Transverse colon (tissue), 4 donors: ENCODE measurements at regions of chr10 and their contacts with region 1.

Region 1: GRCh38 chr10:43689955-43690771 is 41.5 kb upstream of the ZNF32 start:
- DNase-seq: peak; percentile 86
- H3K4me3 ChIP-seq: peak overlapping the region; percentile 35 to 57 (median 42)
- H3K27ac ChIP-seq: peak overlapping the region; percentile 60 to 75 (median 72)
- H3K4me1 ChIP-seq: peaks cover 0 to 14% (median 10%) of the 10 kb centered on the region in 4 donors
- H3K27me3 ChIP-seq: no peaks in the 10 kb centered on the region
- CTCF ChIP-seq: peak; percentile 83 to 96 (median 91)
- EP300 ChIP-seq: no peak
- POLR2A ChIP-seq: peak; percentile 39

Region 2: DNA sequence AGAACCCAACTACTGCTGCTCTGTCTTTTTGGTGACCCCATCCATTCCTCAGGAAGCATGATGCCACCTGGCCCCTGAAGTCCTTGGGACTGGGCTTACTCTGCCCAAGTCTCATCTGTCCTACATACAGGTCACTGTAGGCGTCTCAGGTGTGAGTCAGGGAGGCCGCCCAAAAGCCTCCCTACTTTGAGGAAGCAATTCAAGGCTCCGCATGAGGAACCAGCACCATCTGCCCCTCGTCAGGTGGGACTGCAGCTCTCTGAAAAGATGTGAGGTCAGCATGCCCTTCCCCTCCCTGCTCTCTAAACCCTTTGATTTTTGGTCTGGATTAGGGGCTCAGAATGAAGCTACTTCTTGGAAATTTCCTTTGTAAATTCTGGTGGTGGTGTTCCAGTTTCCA is 340.0 kb after region 1 on chr10:
- in situ Hi-C with region 1: loop called in 1 of 4 experiments (anchors 25 kb)
- intact Hi-C with region 1: no loop called
- DNase-seq: no peak
- H3K4me3 ChIP-seq: no peak overlapping the region
- H3K27ac ChIP-seq: no peak overlapping the region
- H3K4me1 ChIP-seq: no peaks in the 10 kb centered on the region
- H3K27me3 ChIP-seq: no peaks in the 10 kb centered on the region
- CTCF ChIP-seq: no peak
- EP300 ChIP-seq: no peak
- POLR2A ChIP-seq: no peak

Region 3: DNA sequence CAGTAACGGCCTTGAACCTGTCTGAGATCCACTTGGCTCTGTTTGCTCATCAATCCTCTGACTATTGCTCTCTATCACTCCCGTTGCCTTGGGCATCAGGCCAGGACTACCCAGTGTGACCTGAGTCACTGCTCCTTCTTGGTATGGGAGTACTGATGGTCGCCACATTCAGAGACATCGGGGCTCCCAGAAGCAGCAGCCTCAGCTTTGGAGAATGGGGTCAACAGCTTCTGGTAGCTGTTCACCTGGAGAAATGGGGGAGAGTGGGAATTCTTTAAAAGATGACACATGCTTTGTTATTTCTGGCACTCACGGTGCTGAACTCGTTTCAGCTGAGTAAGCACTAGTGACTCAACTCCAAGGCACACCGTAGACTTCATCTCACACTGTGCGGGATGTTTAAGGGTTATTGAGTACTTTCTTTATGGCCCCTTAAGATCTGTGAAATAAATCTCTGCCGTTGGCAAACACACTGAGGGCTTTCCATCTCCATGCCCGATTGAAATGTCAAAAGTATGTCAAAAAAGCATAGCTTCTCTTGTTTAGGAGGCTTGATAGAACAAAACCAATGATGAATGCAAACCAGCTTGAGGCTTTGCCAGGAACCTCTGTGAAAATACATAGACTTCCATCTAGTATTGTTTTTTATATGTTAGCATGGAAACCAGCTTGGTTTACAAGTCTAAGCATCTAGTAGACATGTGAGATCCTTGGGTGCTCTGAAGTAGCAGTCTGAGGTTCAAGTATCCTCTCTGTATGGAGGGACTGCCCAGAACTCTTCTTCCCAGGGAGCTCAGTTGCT is 361.6 kb after region 1 on chr10:
- in situ Hi-C with region 1: loop called in 2 of 4 experiments (anchors 25 kb)
- intact Hi-C with region 1: no loop called
- DNase-seq: no peak
- H3K4me3 ChIP-seq: no peak overlapping the region
- H3K27ac ChIP-seq: no peak overlapping the region
- H3K4me1 ChIP-seq: peaks cover 0 to 8% (median 4%) of the 10 kb centered on the region in 4 donors
- H3K27me3 ChIP-seq: no peaks in the 10 kb centered on the region
- CTCF ChIP-seq: no peak
- EP300 ChIP-seq: no peak
- POLR2A ChIP-seq: no peak

Region 4: GRCh38 chr10:44310762-44311562 is 620.8 kb after region 1 on chr10:
- in situ Hi-C with region 1: loop called in 2 of 4 experiments (anchors 25 kb)
- intact Hi-C with region 1: no loop called
- DNase-seq: peak; percentile 84
- H3K4me3 ChIP-seq: peak overlapping the region in 2 of 4 donors; percentile 24 to 34
- H3K27ac ChIP-seq: peak overlapping the region in 1 of 4 donors; percentile 8
- H3K4me1 ChIP-seq: peaks cover 4 to 10% (median 9%) of the 10 kb centered on the region in 4 donors
- H3K27me3 ChIP-seq: no peaks in the 10 kb centered on the region
- CTCF ChIP-seq: peak; percentile 77 to 90 (median 85)
- EP300 ChIP-seq: no peak
- POLR2A ChIP-seq: no peak